ENCODE measurements at regions of chr10 and their contacts with region 1.

Region 1: DNA sequence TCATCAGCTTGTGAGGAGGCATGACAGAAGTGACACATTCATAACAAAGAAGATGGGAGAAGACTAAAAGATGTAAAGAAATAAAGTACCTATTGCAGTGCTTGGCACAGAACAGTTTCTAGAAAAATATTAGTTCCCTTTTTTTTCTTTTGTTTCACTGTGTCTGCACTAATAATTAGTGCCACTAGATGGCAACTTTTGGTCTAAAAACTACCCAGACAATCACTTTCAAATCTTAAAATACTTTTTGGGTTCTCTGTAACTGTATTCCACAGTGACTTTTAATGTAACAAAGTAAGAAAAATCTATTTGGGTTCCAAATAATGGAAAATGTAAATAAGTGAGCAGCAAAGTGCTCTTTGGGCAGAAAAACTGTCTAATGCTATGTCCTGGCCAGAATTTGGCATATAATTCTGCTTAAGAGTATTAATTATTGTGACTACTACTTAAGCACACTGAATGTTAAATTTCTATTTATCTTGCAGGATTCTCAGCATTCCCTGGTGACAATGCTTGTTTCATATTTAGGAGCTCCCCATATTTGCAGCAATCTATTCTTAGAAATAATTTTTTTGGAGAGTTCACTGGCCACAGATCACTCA is 134.8 kb upstream of the KIF5B start:
- DNase-seq: peak in 1 of 2 experiments; percentile 56
- H3K4me3 ChIP-seq: no peak overlapping the region
- H3K4me3 Mint-ChIP-seq: no peak overlapping the region
- H3K27ac Mint-ChIP-seq: no peak overlapping the region
- H3K4me1 ChIP-seq: peaks cover 24% of the 10 kb centered on the region
- H3K4me1 Mint-ChIP-seq: peaks cover 20% of the 10 kb centered on the region
- H3K27me3 ChIP-seq: no peaks in the 10 kb centered on the region
- H3K27me3 Mint-ChIP-seq: no peaks in the 10 kb centered on the region
- CTCF ChIP-seq: peak; percentile 70 to 75

Region 2: GRCh38 chr10:31961277-31962074 is 229.5 kb before region 1 on chr10:
- CTCF ChIA-PET with region 1: no interaction called
- POLR2A ChIA-PET with region 1: no interaction called
- intact Hi-C with region 1: loop called (anchors 5 kb)
- DNase-seq: no peak
- H3K4me3 ChIP-seq: no peak overlapping the region
- H3K4me3 Mint-ChIP-seq: no peak overlapping the region
- H3K27ac Mint-ChIP-seq: peak overlapping the region; percentile 94
- H3K4me1 ChIP-seq: peaks cover 46% of the 10 kb centered on the region
- H3K4me1 Mint-ChIP-seq: peaks cover 38% of the 10 kb centered on the region
- H3K27me3 ChIP-seq: no peaks in the 10 kb centered on the region
- H3K27me3 Mint-ChIP-seq: no peaks in the 10 kb centered on the region
- CTCF ChIP-seq: no peak

Region 3: DNA sequence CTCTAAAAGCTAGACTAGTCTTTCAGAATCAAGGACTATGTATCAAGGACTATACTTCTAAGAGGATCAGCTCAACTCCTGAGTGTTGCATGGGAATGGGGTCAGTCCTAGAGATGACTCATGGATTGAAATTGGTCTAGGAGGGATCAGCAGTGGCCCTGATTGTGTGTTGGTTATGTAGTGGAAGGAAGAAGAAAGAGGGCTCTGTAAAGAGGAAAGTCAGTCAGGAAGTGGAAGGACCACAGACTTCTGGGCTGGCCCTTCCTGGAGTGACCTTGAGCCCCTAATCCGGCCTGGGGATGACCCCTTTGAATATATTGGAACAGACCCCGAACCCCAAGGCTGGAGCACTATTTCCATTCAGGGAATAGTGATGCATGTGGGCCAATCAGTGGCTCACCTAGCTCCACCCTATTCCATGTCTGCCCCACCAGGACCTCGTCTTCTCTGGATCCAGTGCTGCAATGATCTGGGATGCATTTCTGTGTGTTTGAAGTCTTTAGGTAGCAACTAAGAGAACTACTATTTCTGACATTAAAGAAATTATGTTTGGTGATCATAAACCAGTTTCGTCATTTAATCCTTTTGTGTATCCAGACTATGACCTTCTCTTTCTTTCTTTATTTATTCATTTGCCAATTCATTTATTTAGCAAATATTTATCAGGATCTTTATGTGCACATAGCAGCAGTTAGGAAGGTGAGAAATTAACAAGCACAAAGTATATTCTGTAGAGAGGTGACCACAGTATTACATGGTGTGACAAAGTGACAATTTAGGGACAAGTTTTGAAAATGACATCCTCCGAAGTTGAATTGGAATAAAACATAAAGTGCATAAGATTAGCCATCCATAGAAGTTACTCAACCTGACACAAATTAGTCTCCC is 86.1 kb before region 1 on chr10:
- CTCF ChIA-PET with region 1: no interaction called
- POLR2A ChIA-PET with region 1: interaction called, 15 read pairs
- intact Hi-C with region 1: no loop called
- DNase-seq: no peak
- H3K4me3 ChIP-seq: no peak overlapping the region
- H3K4me3 Mint-ChIP-seq: no peak overlapping the region
- H3K27ac Mint-ChIP-seq: no peak overlapping the region
- H3K4me1 ChIP-seq: peaks cover 27% of the 10 kb centered on the region
- H3K4me1 Mint-ChIP-seq: peaks cover 18% of the 10 kb centered on the region
- H3K27me3 ChIP-seq: no peaks in the 10 kb centered on the region
- H3K27me3 Mint-ChIP-seq: no peaks in the 10 kb centered on the region
- CTCF ChIP-seq: no peak

Region 4: GRCh38 chr10:32367793-32368453 is 176.9 kb after region 1 on chr10:
- CTCF ChIA-PET with region 1: interaction called, 3 read pairs
- POLR2A ChIA-PET with region 1: no interaction called
- intact Hi-C with region 1: loop called (anchors 1 kb)
- DNase-seq: peak; percentile 75 to 81
- H3K4me3 ChIP-seq: no peak overlapping the region
- H3K4me3 Mint-ChIP-seq: peak overlapping the region; percentile 22
- H3K27ac Mint-ChIP-seq: no peak overlapping the region
- H3K4me1 ChIP-seq: no peaks in the 10 kb centered on the region; the same call in 1 of the 2 replicates
- H3K4me1 Mint-ChIP-seq: peaks cover 11% of the 10 kb centered on the region
- H3K27me3 ChIP-seq: no peaks in the 10 kb centered on the region
- H3K27me3 Mint-ChIP-seq: no peaks in the 10 kb centered on the region
- CTCF ChIP-seq: peak; percentile 91 to 93